Aorta (tissue), 5 donors: ENCODE measurements at regions of chr3 and their contacts with region 1.

Region 1: GRCh38 chr3:73086071-73086494 is 24.6 kb downstream of the EBLN2 start:
- DNase-seq: no peak
- ATAC-seq: peak; percentile 83
- H3K4me3 ChIP-seq: no peak overlapping the region
- H3K27ac ChIP-seq: no peak overlapping the region
- H3K4me1 ChIP-seq: no peaks in the 10 kb centered on the region
- H3K27me3 ChIP-seq: no peaks in the 10 kb centered on the region

Region 2: GRCh38 chr3:71710906-71711494 is 1375.1 kb before region 1 on chr3:
- intact Hi-C with region 1: loop called in 1 of 2 experiments (anchors 10 kb)
- DNase-seq: no peak
- ATAC-seq: peak; percentile 78
- H3K4me3 ChIP-seq: no peak overlapping the region
- H3K27ac ChIP-seq: no peak overlapping the region
- H3K4me1 ChIP-seq: no peaks in the 10 kb centered on the region
- H3K27me3 ChIP-seq: no peaks in the 10 kb centered on the region

Region 3: DNA sequence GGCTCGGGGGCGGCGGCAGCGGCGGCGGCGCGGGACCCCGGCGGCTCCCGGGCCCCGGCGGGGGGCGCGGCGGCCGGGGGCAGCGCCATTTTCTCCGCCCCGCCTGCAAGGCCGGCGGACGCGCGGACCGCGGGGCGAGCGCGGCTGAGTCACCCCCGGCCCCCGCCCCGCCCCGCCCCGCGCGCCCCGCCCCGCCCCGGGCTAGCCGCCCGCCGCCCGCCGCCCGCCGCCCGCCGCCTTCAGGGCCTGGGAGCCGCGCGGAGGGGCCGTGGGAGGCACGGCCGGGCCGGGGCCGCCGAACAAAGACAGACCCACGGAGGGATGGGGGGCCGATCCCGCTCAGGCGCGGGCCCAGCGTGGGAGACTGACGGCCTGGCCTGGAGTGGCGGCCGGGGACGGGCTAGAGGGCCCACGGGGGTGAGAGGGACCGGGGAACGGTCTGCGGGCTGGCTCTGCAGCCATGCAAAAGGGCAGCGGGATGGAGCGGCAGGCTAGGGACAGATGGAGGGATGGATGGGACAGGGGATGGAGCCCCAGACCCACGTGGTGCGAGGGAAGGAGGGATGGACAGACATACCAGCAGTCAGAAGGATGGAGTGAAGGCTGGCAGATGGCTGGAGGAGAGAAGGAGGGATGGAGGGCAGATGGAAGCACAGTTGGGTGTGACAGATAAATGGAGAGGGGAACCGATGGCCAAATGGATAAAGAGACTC is 1360.6 kb before region 1 on chr3 and contains the start of gene EIF4E3:
- intact Hi-C with region 1: loop called in 1 of 2 experiments (anchors 10 kb)
- DNase-seq: peak; percentile 52 to 81
- ATAC-seq: peak; percentile 50
- H3K4me3 ChIP-seq: peak within 1 kb of the TSS; percentile 93 to 97
- H3K27ac ChIP-seq: no peak within 1 kb of the TSS
- H3K4me1 ChIP-seq: no peaks in the 10 kb centered on the region
- H3K27me3 ChIP-seq: no peaks in the 10 kb centered on the region
- total RNA-seq, gene EIF4E3: 22.2 to 29.3 TPM

Region 4: GRCh38 chr3:73024836-73025235 is 61.2 kb before region 1 on chr3:
- intact Hi-C with region 1: no loop called
- DNase-seq: no peak
- ATAC-seq: no peak
- H3K4me3 ChIP-seq: no peak overlapping the region
- H3K27ac ChIP-seq: no peak overlapping the region
- H3K4me1 ChIP-seq: peaks cover 3 to 5% of the 10 kb centered on the region in 2 donors
- H3K27me3 ChIP-seq: no peaks in the 10 kb centered on the region

Region 5: DNA sequence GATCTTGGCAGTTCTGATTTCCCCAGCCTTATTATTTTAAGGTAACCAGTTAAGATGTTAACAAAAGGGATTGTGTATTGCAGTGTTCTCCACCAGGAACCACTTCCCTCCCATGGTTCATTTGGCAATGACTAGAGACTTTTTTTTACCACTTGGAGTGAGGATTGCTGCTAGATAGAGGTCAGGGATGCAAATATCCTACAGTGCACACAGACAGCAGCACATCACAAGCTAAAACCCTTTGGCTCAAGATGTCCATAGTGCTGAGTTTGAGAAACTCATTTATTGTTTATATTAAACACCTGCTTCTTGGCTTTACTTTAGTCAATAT is 48.7 kb before region 1 on chr3:
- intact Hi-C with region 1: no loop called
- DNase-seq: no peak
- ATAC-seq: no peak
- H3K4me3 ChIP-seq: no peak overlapping the region
- H3K27ac ChIP-seq: peak overlapping the region in 1 of 2 donors; percentile 67
- H3K4me1 ChIP-seq: peaks cover 6 to 14% of the 10 kb centered on the region in 2 donors
- H3K27me3 ChIP-seq: no peaks in the 10 kb centered on the region

Region 6: GRCh38 chr3:73121669-73122331 is 35.7 kb after region 1 on chr3:
- intact Hi-C with region 1: no loop called
- DNase-seq: no peak
- ATAC-seq: no peak
- H3K4me3 ChIP-seq: no peak overlapping the region
- H3K27ac ChIP-seq: no peak overlapping the region
- H3K4me1 ChIP-seq: no peaks in the 10 kb centered on the region
- H3K27me3 ChIP-seq: no peaks in the 10 kb centered on the region